ENCODE measurements at regions of chr19 and their contacts with region 1.

Region 1: DNA sequence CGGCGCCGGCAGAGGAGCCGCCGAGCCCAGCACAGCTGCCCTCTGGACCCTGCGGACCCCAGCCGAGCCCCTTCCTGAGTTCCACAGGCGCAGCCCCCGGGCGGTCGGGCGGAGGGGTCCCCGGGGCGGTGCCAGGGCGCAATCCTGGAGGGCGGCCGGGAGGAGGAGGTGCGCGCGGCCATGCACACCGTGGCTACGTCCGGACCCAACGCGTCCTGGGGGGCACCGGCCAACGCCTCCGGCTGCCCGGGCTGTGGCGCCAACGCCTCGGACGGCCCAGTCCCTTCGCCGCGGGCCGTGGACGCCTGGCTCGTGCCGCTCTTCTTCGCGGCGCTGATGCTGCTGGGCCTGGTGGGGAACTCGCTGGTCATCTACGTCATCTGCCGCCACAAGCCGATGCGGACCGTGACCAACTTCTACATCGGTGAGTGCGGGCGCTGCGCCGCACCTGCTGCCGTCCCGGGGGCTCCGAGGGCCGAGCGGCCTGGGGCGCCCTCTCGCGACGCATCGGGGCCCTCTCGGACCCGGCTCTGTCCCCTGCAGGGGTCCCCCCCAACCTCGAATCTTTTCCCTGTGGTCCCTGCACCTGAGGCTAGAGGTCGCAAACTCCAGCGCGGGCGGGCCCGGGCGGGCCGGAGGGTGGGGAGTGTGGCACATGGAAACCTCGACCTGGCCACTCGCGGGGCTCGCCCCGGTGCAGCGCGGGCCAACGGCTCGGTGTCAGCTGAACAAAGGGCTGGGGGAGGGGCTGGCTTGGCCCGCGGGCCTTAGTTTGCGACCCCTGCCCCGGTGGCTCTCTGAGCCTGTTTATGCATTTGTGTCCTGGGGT is at the start of gene KISS1R:
- DNase-seq: peak in 1 of 10 donors; percentile 89

Region 2: GRCh38 chr19:771332-771785 is 146.2 kb before region 1 on chr19:
- intact Hi-C with region 1: loop called (anchors 5 kb)
- DNase-seq: no peak

Region 3: GRCh38 chr19:996051-996838 is 78.7 kb after region 1 on chr19:
- intact Hi-C with region 1: no loop called
- DNase-seq: no peak